Right cardiac atrium (tissue), 5 donors: ENCODE measurements at regions of chr21 and their contacts with region 1.

Region 1: GRCh38 chr21:44949779-44950198 is 10.0 kb downstream of the SLX9 start:
- DNase-seq: peak; percentile 89 to 97 (median 95)
- ATAC-seq: peak; percentile 64 to 74
- H3K4me3 ChIP-seq: no peak overlapping the region
- H3K27ac ChIP-seq: no peak overlapping the region
- H3K4me1 ChIP-seq: no peaks in the 10 kb centered on the region
- H3K27me3 ChIP-seq: no peaks in the 10 kb centered on the region

Region 2: DNA sequence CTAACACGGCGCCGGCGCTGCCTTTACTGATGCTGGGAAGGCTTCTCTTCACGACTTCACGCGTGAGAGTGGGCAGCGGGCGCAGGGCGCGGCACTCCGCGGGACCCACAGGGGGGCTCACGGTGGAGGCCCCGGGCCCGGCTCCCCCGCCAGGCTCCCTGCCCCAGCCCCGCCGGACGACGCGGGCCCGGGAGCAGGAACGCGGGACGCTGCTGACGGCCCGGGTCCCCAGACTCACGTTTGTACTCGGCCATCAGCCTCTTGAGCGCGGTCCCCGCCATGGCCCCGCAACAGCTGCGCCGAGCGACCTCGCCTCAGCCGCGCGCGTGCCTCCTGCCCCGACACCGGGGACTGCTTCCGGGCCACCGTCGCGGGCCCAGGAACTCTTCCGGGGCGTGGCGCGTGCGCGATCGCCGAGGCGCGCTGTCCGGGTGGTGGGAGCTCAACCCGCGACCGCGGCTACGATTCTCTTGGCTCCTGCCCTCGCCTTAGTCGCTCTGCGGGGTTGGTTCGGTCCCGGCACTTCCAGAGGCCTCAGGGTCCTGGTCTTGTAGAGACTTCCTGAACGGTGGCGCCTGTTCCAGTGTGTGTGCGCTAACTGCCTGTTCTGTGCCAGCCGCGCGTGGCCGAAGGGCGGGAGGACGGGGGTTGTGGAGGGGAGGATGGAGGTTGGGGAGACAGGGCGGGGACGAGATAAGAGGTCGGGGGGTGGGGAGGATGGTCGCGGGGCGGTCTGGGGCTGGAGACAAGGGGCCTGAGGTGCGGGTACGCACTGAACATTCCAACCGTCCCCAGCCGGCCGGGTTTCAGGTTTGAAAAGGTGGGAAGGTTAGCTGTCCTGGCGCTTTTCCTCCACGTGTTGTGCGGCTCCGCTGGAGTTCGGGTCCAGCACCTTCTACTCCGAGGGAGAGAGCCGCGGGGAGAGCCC is 148.1 kb before region 1 on chr21 and contains the start of gene UBE2G2:
- intact Hi-C with region 1: no loop called
- DNase-seq: peak; percentile 84 to 94 (median 92)
- ATAC-seq: peak; percentile 96 to 97
- H3K4me3 ChIP-seq: peak within 1 kb of the TSS; percentile 92
- H3K27ac ChIP-seq: peak within 1 kb of the TSS; percentile 32
- H3K4me1 ChIP-seq: peaks cover 3% of the 10 kb centered on the region
- H3K27me3 ChIP-seq: no peaks in the 10 kb centered on the region
- total RNA-seq, gene UBE2G2: 57.0 to 69.8 (median 64.7) TPM

Region 3: DNA sequence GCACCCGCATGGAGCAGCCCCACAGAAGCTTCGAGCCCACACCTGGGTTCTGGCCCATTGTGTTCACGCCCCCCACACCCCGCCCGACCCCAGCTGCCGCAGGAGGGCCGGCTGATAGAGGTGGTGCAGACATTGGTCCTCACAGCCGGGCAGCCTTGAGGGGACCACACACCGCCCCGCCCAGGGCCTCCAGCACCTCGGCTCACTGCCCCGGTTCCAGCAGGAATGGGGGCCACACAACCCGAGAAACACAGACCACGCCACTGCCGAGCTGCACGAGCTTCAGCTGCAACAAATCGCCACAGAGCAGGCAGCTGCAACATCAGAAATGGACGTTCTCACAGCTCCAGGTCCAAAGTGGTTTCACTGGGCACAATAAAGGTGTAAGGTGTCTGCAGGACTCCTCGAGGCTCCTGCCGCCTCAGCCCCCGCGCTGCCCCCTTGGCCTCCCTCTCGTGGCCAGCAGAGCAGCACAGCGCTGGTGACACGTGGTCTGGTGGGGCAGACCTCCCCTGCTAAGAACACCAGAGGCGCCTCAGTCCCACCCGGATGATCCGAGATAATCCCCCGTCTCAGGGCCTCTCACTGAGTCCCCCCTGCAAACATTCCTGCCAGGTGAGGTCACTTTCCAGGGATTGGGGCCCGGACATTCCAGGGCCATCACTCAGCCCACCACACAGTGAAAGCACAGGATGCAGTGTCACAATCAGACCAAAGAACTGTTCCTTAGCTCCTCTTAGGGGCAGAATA is 62.3 kb after region 1 on chr21:
- intact Hi-C with region 1: loop called in 1 of 4 experiments (anchors 10 kb)
- DNase-seq: peak; percentile 11 to 58 (median 47)
- ATAC-seq: peak; percentile 17 to 59
- H3K4me3 ChIP-seq: no peak overlapping the region
- H3K27ac ChIP-seq: no peak overlapping the region
- H3K4me1 ChIP-seq: peaks cover 3% of the 10 kb centered on the region
- H3K27me3 ChIP-seq: no peaks in the 10 kb centered on the region

Region 4: GRCh38 chr21:45129189-45129923 is 179.6 kb after region 1 on chr21:
- intact Hi-C with region 1: loop called in 2 of 4 experiments (anchors 2 to 5 kb)
- DNase-seq: peak; percentile 50 to 85 (median 80)
- ATAC-seq: peak; percentile 64 to 75
- H3K4me3 ChIP-seq: no peak overlapping the region
- H3K27ac ChIP-seq: peak overlapping the region; percentile 32
- H3K4me1 ChIP-seq: peaks cover 11% of the 10 kb centered on the region
- H3K27me3 ChIP-seq: no peaks in the 10 kb centered on the region

Region 5: GRCh38 chr21:45140346-45140940 is 190.7 kb after region 1 on chr21:
- intact Hi-C with region 1: loop called in 3 of 4 experiments (anchors 2 to 5 kb)
- DNase-seq: peak; percentile 81 to 89 (median 85)
- ATAC-seq: peak; percentile 83 to 90
- H3K4me3 ChIP-seq: no peak overlapping the region
- H3K27ac ChIP-seq: no peak overlapping the region
- H3K4me1 ChIP-seq: no peaks in the 10 kb centered on the region
- H3K27me3 ChIP-seq: no peaks in the 10 kb centered on the region

Region 6: GRCh38 chr21:45151445-45152160 is 201.8 kb after region 1 on chr21:
- intact Hi-C with region 1: no loop called
- DNase-seq: no peak
- ATAC-seq: no peak
- H3K4me3 ChIP-seq: no peak overlapping the region
- H3K27ac ChIP-seq: no peak overlapping the region
- H3K4me1 ChIP-seq: no peaks in the 10 kb centered on the region
- H3K27me3 ChIP-seq: no peaks in the 10 kb centered on the region